Mammary epithelial cell (primary cell): ENCODE measurements at regions of chr4 and their contacts with region 1.

Region 1: GRCh38 chr4:81471588-81472288 is at the start of gene RASGEF1B:
- DNase-seq: peak; percentile 88
- H3K4me3 ChIP-seq: peak within 1 kb of the TSS; percentile 61 to 85 (median 68)
- H3K27ac ChIP-seq: peak within 1 kb of the TSS; percentile 30
- H3K4me1 ChIP-seq: peaks cover 23% of the 10 kb centered on the region
- H3K27me3 ChIP-seq: no peaks in the 10 kb centered on the region
- CTCF ChIP-seq: peak in 1 of 2 donors; percentile 1
- total RNA-seq, gene RASGEF1B: 10.6 to 15.3 TPM

Region 2: GRCh38 chr4:81631958-81632441 is 160.3 kb after region 1 on chr4:
- CTCF ChIA-PET with region 1: no interaction called
- dilution Hi-C with region 1: no loop called
- in situ Hi-C with region 1: no loop called
- intact Hi-C with region 1: loop called (anchors 1 kb)
- DNase-seq: peak; percentile 99
- H3K4me3 ChIP-seq: no peak overlapping the region
- H3K27ac ChIP-seq: peak overlapping the region; percentile 97
- H3K4me1 ChIP-seq: peaks cover 13% of the 10 kb centered on the region
- H3K27me3 ChIP-seq: no peaks in the 10 kb centered on the region
- CTCF ChIP-seq: no peak

Region 3: DNA sequence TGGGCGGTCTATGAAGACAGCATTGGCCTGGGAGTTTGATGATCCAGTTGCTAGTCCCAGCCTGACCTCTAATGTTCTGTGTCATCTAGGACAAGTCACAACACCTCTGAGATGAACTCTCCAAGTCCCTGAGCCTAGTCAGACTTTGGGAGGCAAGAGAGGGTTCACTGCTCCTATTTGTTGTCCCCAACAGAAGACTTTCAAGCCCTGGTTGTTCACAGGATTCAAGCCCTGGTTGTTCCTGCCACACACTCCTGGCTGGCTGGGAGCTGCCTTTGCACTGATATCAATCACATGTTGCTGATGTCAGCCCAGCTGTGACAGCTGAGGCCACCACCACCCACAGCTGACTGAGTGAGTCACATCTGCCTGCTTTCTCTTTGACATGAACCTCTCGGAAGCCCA is 253.2 kb after region 1 on chr4:
- CTCF ChIA-PET with region 1: no interaction called
- dilution Hi-C with region 1: no loop called
- in situ Hi-C with region 1: no loop called
- intact Hi-C with region 1: loop called (anchors 5 kb)
- DNase-seq: peak; percentile 57
- H3K4me3 ChIP-seq: no peak overlapping the region
- H3K27ac ChIP-seq: no peak overlapping the region
- H3K4me1 ChIP-seq: peaks cover 9% of the 10 kb centered on the region
- H3K27me3 ChIP-seq: no peaks in the 10 kb centered on the region
- CTCF ChIP-seq: no peak

Region 4: GRCh38 chr4:81844717-81845116 is 373.0 kb after region 1 on chr4:
- CTCF ChIA-PET with region 1: interaction called, 11 read pairs
- dilution Hi-C with region 1: no loop called
- in situ Hi-C with region 1: loop called (anchors 10 kb)
- intact Hi-C with region 1: loop called (anchors 1 kb)
- DNase-seq: peak; percentile 76
- H3K4me3 ChIP-seq: no peak overlapping the region
- H3K27ac ChIP-seq: no peak overlapping the region
- H3K4me1 ChIP-seq: no peaks in the 10 kb centered on the region
- H3K27me3 ChIP-seq: no peaks in the 10 kb centered on the region
- CTCF ChIP-seq: peak; percentile 61 to 75

Region 5: DNA sequence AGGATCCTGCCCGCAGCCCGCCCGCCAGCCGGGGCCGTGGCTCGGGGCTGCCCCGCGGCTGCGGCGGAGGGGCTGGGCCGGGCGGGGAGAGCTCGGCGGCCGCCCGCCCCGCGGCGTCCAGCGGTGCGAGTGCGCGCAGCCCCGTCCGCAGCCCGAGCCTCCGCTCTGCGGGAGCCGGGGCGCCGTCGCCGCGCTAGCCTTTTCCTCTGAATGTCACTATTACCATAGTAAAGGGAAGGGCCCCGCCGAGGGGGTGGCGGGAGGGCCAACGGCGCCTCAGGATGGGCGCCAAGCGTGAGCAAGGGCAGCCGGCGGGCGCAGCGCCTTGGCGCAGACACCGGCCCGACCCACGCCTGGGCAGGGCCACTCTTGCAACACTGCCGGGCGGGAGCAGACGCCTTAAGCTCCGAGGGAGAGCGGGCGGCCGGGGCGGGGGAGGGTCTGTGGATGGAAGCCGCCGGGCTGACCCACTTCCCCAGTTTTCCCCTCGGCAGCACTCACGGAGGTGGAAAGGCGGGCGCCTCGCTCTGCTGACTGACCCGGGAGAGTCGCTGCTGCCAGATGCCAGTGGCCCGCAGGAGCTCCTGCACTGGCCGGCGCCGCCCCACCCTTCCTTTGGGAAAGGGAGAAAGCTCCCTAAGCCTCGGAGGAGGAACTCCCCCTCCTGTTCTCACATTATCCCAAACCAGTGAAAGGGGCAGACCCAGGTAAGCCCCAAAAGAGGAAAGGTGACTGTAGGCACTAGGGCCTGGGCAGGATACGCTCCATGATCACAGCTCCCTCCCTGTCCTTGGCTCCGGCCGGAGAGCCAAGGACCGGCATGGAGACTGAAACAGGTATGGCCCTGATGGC is 572.6 kb after region 1 on chr4:
- CTCF ChIA-PET with region 1: no interaction called
- dilution Hi-C with region 1: no loop called
- in situ Hi-C with region 1: no loop called
- intact Hi-C with region 1: loop called (anchors 5 kb)
- DNase-seq: peak; percentile 77
- H3K4me3 ChIP-seq: peak overlapping the region; percentile 62 to 72 (median 65)
- H3K27ac ChIP-seq: no peak overlapping the region
- H3K4me1 ChIP-seq: peaks cover 39% of the 10 kb centered on the region
- H3K27me3 ChIP-seq: no peaks in the 10 kb centered on the region
- CTCF ChIP-seq: no peak

Region 6: GRCh38 chr4:82268050-82268825 is 796.5 kb after region 1 on chr4:
- CTCF ChIA-PET with region 1: no interaction called
- dilution Hi-C with region 1: no loop called
- in situ Hi-C with region 1: no loop called
- intact Hi-C with region 1: loop called (anchors 1 kb)
- DNase-seq: peak; percentile 70
- H3K4me3 ChIP-seq: no peak overlapping the region
- H3K27ac ChIP-seq: peak overlapping the region; percentile 32
- H3K4me1 ChIP-seq: peaks cover 11% of the 10 kb centered on the region
- H3K27me3 ChIP-seq: no peaks in the 10 kb centered on the region
- CTCF ChIP-seq: peak; percentile 94 to 99